ENCODE measurements at regions of chr2 and their contacts with region 1.

Region 1: DNA sequence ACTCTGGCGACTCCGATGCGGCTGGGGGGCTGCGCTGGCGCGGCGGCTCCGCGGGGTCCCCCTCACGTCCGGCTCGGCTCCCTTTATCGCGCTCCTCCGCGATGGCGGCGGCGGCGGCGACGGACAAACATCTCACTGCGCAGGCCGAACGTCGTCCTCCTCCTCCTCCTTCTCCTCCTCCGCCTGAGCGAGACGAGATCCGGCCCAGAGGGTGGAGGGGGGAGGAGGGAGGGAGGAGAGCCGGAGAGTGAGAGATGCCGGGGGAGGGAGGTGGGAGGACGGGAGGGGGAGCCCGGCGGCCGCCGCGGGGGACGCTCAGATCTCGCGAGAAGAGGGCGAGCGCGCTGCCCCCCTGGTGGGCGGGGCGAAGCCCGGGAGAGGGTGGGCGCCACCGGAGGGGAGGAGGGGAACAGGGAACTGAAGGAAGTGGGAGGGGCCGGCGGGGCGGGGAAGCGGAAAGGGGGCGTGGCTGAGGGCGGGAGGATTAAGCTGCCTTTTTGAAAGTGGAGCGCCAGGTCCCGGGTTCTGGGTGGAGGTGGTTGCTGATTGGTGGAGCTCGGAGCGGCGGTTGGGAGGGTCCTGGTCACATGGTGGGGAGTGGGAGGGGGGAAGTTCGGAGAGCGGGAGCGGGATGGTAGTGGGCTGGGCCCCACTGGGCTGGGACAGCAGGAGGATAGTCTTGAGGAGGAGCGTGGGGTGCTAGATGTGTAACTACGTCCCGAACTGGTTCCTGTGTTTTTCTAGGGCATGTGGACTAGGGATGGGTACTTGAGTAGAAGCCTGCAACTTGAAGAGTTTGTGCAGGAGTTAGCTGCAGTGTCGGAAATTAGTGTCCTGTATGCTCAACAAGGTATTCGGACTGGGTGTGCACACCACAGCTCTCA is at the start of gene CUL3:
- DNase-seq: peak; percentile 99
- H3K4me3 Mint-ChIP-seq: peak within 1 kb of the TSS; percentile 97
- H3K27ac Mint-ChIP-seq: peak within 1 kb of the TSS; percentile 96
- H3K4me1 Mint-ChIP-seq: peaks cover 44% of the 10 kb centered on the region
- H3K27me3 Mint-ChIP-seq: no peaks in the 10 kb centered on the region
- total RNA-seq, gene CUL3: 97.1 and 103 TPM in 2 replicates

Region 2: DNA sequence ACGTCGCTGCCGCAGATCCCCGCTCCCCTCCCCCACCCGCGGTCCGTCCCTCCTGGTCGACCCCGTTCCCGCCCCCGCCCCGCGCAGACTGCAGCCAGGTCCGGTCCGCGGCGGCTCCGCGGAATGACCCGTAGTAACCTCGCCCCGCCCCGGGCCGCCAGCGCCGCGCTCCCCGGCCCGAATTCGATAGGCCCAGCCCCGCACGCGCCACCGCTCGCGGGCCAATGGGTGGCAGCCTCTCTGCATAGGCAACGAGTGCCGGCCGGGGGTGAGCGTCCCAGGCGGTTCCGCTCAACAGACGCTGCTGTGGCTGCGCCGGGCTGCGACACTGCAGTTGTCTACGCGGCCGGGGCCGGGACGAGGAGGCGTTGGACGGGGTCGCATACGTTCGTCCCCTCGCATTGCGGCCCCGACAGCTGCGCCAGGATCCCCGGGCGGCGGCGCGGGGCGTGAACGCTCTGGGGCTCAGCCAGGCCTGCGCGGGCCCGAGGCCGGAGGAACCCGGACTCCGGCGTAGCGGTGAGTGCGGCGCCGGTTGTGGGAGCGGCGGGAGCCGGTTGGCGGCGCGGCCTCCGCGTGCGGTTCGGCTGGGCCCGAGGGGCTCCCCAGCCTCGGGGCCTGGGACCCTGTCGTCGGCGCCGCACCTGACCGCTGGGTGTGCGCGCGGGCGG is 1724.6 kb before region 1 on chr2 and contains the start of gene ACSL3:
- intact Hi-C with region 1: loop called (anchors 5 kb)
- DNase-seq: peak; percentile 95
- H3K4me3 Mint-ChIP-seq: peak within 1 kb of the TSS; percentile 80
- H3K27ac Mint-ChIP-seq: peak within 1 kb of the TSS; percentile 98
- H3K4me1 Mint-ChIP-seq: peaks cover 9% of the 10 kb centered on the region
- H3K27me3 Mint-ChIP-seq: peaks cover 15% of the 10 kb centered on the region
- total RNA-seq, gene ACSL3: 75.4 and 79.4 TPM in 2 replicates

Region 3: GRCh38 chr2:223549215-223549614 is 1036.2 kb before region 1 on chr2:
- intact Hi-C with region 1: no loop called
- DNase-seq: no peak
- H3K4me3 Mint-ChIP-seq: no peak overlapping the region
- H3K27ac Mint-ChIP-seq: no peak overlapping the region
- H3K4me1 Mint-ChIP-seq: no peaks in the 10 kb centered on the region
- H3K27me3 Mint-ChIP-seq: no peaks in the 10 kb centered on the region

Region 4: DNA sequence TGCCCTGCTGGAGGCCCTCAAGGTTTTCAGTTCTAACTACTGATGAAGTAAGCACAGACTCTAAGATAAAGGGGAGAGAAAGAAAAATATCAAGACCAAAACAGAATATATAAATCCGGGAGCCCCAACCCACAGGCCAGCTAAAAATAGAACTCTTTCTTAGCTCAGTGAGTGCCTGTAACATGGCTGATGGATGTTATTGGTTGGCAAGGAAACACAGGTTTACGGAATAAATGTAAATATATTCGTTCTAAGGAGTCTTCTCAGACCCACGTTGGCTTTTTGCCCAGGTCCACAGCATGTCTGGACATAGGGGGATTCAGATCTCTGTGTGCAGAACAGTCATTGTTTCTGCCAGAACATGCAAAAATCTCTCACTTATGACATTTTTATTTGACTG is 407.4 kb before region 1 on chr2:
- intact Hi-C with region 1: no loop called
- DNase-seq: no peak
- H3K4me3 Mint-ChIP-seq: no peak overlapping the region
- H3K27ac Mint-ChIP-seq: no peak overlapping the region
- H3K4me1 Mint-ChIP-seq: no peaks in the 10 kb centered on the region
- H3K27me3 Mint-ChIP-seq: peaks cover 2% of the 10 kb centered on the region

Region 5: DNA sequence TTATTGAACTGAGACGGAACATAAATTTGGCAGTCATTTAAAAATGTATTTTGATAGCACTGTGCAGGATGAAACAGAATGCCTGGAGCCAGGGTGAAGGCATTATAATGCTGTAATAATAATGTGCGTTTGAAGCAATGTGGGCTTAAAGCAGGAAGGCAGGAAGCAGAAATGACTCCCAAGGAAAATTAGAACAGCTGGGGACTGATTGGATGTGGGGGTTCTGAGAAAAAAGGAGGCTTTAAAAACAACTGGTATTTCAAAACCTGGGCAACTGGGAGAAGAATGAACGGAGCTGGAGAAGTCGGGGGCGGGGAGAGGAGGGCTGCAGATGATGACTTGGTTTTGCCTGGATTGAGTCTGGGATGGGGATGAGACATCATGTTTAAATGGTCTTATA is 196.1 kb before region 1 on chr2:
- intact Hi-C with region 1: no loop called
- DNase-seq: no peak
- H3K4me3 Mint-ChIP-seq: no peak overlapping the region
- H3K27ac Mint-ChIP-seq: no peak overlapping the region
- H3K4me1 Mint-ChIP-seq: no peaks in the 10 kb centered on the region
- H3K27me3 Mint-ChIP-seq: peaks cover 6% of the 10 kb centered on the region

Region 6: GRCh38 chr2:224401641-224402342 is 183.7 kb before region 1 on chr2 and contains the start of gene FAM124B:
- intact Hi-C with region 1: loop called (anchors 5 kb)
- DNase-seq: peak; percentile 23
- H3K4me3 Mint-ChIP-seq: peak within 1 kb of the TSS; percentile 73
- H3K27ac Mint-ChIP-seq: peak within 1 kb of the TSS; percentile 76
- H3K4me1 Mint-ChIP-seq: peaks cover 12% of the 10 kb centered on the region
- H3K27me3 Mint-ChIP-seq: peaks cover 5% of the 10 kb centered on the region
- total RNA-seq, gene FAM124B: 0.23 and 0.34 TPM in 2 replicates

Region 7: GRCh38 chr2:224570328-224570993 is 15.0 kb before region 1 on chr2:
- intact Hi-C with region 1: loop called (anchors 2 kb)
- DNase-seq: no peak
- H3K4me3 Mint-ChIP-seq: no peak overlapping the region
- H3K27ac Mint-ChIP-seq: peak overlapping the region; percentile 1
- H3K4me1 Mint-ChIP-seq: peaks cover 49% of the 10 kb centered on the region
- H3K27me3 Mint-ChIP-seq: no peaks in the 10 kb centered on the region

Region 8: GRCh38 chr2:224650815-224651439 is 65.5 kb after region 1 on chr2:
- intact Hi-C with region 1: loop called (anchors 2 kb)
- DNase-seq: no peak
- H3K4me3 Mint-ChIP-seq: no peak overlapping the region
- H3K27ac Mint-ChIP-seq: no peak overlapping the region
- H3K4me1 Mint-ChIP-seq: no peaks in the 10 kb centered on the region
- H3K27me3 Mint-ChIP-seq: no peaks in the 10 kb centered on the region

Region 9: GRCh38 chr2:225041851-225042799 is 456.7 kb after region 1 on chr2 and contains the start of gene DOCK10:
- intact Hi-C with region 1: loop called (anchors 1 kb)
- DNase-seq: peak; percentile 50
- H3K4me3 Mint-ChIP-seq: peak within 1 kb of the TSS; percentile 96
- H3K27ac Mint-ChIP-seq: peak within 1 kb of the TSS; percentile 98
- H3K4me1 Mint-ChIP-seq: peaks cover 58% of the 10 kb centered on the region
- H3K27me3 Mint-ChIP-seq: peaks cover 5% of the 10 kb centered on the region
- total RNA-seq, gene DOCK10: 144 and 159 TPM in 2 replicates

Measured in activated T-helper 1 cell treated with anti-CD3 and anti-CD28 coated beads, Interleukin-12 subunit alpha, Interleukin-12 subunit beta, Interleukin-2, Interleukin-4 antibody, amounts not matched to agents 30 ng/mL and 10 ng/mL and 1 ng/mL, durations not matched to agents 14 hours and 24 hours and 36 hours (primary cell).